H1 (cell line): ENCODE measurements at regions of chr9 and their contacts with region 1.

Region 1: DNA sequence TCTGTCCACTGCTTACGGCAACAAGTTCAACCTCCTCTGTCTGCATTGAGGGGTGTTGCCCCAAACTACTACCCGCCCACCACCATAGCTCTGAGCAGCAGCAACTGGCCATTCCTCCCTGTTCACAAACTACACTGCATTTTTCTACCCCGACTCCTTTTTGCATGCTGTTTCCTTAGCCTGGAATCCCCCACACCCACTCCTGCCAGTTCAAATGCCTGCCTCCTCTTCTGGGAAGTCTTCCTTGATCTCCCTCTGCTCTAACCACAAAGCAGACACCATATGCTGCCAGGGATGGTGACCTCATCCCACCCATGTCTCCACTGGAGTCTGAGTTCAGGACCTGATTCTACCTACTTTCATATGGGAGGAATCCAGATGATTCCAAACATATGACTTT is 13.3 kb downstream of the ALDH1B1 start:
- DNase-seq: no peak
- H3K4me3 ChIP-seq: no peak overlapping the region
- H3K27ac ChIP-seq: no peak overlapping the region
- H3K4me1 ChIP-seq: peaks cover 0 to 5% (median 0%) of the 10 kb centered on the region in 4 experiments; a peak in 1 of 7 replicates
- H3K27me3 ChIP-seq: no peaks in the 10 kb centered on the region
- CTCF ChIP-seq: no peak
- EP300 ChIP-seq: no peak
- POLR2A ChIP-seq: no peak
- RAD21 ChIP-seq: no peak

Region 2: GRCh38 chr9:38371495-38371894 is 34.3 kb before region 1 on chr9:
- CTCF ChIA-PET with region 1: interaction called, 12 read pairs
- POLR2A ChIA-PET with region 1: no interaction called
- DNase-seq: no peak
- H3K4me3 ChIP-seq: no peak overlapping the region
- H3K27ac ChIP-seq: no peak overlapping the region
- H3K4me1 ChIP-seq: no peaks in the 10 kb centered on the region; a peak in 1 of 7 replicates
- H3K27me3 ChIP-seq: no peaks in the 10 kb centered on the region; a peak in 2 of 7 replicates
- CTCF ChIP-seq: no peak
- EP300 ChIP-seq: no peak
- POLR2A ChIP-seq: no peak
- RAD21 ChIP-seq: peak; percentile 26 to 37; a peak in 2 of 4 replicates

Region 3: DNA sequence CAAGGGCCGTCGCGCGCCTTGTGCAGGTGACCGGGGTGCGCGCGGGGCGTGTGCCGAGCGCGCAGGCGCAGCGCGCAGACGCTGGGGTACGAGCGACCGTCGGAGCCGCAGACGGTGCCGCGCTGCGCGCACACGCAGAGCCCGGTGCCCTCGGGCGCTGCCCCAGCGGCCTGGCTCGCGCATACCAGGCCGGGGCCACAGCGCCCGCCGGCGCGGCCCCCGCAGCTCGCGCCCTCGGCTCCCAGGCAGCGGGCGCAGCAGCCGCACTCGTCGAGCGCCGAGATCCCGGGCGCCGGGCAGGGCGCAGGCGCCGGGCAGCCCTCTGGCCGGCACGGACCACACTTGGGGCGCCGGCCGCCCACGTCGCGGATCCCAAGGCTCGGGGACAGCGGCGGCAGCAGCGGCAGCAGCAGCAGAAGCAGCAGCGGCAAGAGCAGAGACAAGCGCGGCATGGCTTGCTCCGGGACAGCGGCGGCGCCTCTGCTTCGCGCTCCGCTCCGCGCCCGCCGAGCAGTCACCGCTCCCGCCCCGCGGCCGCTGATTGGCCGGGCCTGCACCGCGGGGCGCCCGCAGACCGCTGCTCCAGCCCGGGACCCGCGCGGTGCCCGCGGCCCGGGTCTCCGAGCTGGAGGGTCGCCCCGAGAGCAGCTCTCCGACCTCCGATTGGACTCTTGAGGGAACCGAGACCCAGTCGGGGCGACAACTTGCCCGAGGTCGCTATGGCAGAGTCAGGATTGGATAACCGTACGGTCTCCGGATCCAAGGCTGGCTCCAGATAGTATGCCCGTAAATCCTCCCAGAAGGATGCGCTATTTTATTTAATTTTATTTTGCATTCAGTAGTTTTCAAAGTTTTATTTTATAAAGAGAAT is 18.4 kb after region 1 on chr9 and contains the start of gene IGFBPL1:
- CTCF ChIA-PET with region 1: interaction called, 11 read pairs
- POLR2A ChIA-PET with region 1: interaction called, 3 read pairs
- DNase-seq: peak in 1 of 2 experiments; percentile 72
- H3K4me3 ChIP-seq: peak within 1 kb of the TSS; percentile 42 to 56 (median 45)
- H3K27ac ChIP-seq: no peak within 1 kb of the TSS; the same call in 1 of the 2 replicates
- H3K4me1 ChIP-seq: peaks cover 8 to 21% (median 17%) of the 10 kb centered on the region in 4 experiments
- H3K27me3 ChIP-seq: peaks cover 11 to 32% (median 25%) of the 10 kb centered on the region in 4 experiments
- CTCF ChIP-seq: no peak
- EP300 ChIP-seq: no peak
- POLR2A ChIP-seq: peak in 1 of 2 experiments; percentile 58; a peak in 1 of 3 replicates
- RAD21 ChIP-seq: no peak
- total RNA-seq, gene IGFBPL1: 33.8 and 36.6 TPM in 2 replicates